Activated CD4-positive, alpha-beta memory T cell treated with anti-CD3 and anti-CD28 coated beads, Interleukin-2, amount 10 ng/mL, durations not matched to agents 7 days and 5 days (primary cell): ENCODE measurements at regions of chr17 and their contacts with region 1.

Region 1: DNA sequence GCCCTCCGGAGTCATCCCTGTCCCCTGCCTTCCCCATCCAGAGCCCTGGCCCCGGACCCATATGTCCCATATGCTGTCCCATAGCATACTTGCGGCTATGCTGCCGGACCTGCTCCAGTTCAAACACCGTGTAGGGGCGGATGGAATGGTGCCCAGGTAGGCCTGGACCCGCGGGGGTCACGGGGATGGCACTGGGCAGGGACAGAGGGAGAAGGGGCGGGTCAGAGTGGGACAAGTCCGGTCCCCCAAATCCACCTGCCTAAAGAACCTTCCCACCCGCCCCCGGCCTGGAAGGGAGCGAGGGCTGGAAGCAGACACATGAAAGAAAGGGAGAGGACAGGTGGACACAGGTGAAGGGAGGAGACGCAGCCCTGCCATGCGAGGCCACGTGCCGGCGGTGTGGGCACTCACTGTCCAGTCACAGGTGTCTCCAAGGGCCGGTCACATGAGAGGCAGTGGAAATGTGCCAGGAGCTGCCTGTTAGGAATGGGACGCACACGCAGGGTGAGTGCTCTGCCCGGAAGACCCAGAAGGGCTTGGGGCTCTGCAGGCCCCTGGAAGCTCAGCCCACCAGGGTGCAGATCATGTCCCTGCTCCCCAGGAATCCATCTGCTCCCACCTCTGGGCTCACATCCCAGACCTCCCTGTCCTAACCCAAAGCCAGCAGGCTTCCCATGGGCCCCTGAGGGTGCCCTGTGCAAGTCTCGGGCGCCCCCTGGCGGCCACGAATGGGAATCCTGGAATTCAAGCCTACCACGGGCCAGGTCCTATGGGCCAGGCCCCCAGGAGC is 14.0 kb downstream of the UBALD2 start:
- DNase-seq: peak; percentile 88
- H3K4me3 Mint-ChIP-seq: no peak overlapping the region
- H3K27ac Mint-ChIP-seq: no peak overlapping the region
- H3K4me1 Mint-ChIP-seq: peaks cover 13% of the 10 kb centered on the region
- H3K27me3 Mint-ChIP-seq: no peaks in the 10 kb centered on the region

Region 2: GRCh38 chr17:76014184-76014924 is 264.8 kb before region 1 on chr17:
- CTCF ChIA-PET with region 1: interaction called, 20 read pairs
- POLR2A ChIA-PET with region 1: no interaction called
- DNase-seq: peak; percentile 80
- H3K4me3 Mint-ChIP-seq: no peak overlapping the region
- H3K27ac Mint-ChIP-seq: no peak overlapping the region
- H3K4me1 Mint-ChIP-seq: peaks cover 2% of the 10 kb centered on the region
- H3K27me3 Mint-ChIP-seq: peaks cover 3% of the 10 kb centered on the region

Region 3: GRCh38 chr17:76115138-76115754 is 163.9 kb before region 1 on chr17:
- CTCF ChIA-PET with region 1: interaction called, 187 read pairs
- POLR2A ChIA-PET with region 1: interaction called, 222 read pairs
- DNase-seq: no peak
- H3K4me3 Mint-ChIP-seq: no peak overlapping the region
- H3K27ac Mint-ChIP-seq: no peak overlapping the region
- H3K4me1 Mint-ChIP-seq: no peaks in the 10 kb centered on the region
- H3K27me3 Mint-ChIP-seq: peaks cover 4% of the 10 kb centered on the region

Region 4: DNA sequence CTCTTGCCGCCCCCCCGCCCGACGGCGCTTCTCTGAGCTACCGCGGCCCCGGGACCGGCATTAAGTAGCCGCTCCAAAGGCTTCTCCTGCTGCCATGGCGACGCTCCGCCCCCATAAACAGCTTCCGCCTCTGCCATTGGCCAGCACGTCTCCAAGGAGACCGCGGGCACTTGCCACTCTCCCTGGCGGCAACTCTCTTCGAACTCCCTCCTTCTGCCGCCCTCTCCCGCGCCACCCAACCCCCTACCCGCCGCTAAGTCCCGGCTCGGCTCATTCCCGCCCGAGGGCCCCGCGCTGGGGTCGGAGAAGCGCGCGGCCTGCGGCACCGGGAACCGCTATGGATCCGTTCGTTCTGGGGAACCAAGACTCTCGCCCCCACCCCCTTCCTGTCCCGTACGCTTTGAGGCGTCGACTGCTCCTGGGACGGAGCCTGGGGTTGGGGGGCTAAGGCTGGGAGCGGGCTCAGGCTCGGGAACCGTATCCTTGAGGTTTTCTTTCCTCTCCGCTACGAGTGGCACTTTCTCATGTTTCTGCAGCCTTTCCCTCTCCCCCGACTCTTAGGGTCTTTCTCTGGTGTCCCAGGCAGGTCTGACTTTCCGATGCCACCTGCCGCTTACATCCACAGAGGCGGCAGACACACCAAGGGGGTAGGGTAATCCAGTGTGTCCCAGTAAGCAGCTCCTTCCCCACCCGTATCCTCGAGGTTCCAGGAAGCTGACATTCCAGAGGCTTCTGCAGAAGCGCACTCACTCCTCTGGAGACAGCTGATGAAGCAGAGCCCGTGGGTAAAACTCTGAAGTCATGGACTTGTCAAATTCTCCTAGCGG is 137.7 kb before region 1 on chr17 and contains the start of gene FOXJ1:
- CTCF ChIA-PET with region 1: interaction called, 18 read pairs
- POLR2A ChIA-PET with region 1: interaction called, 173 read pairs
- DNase-seq: peak; percentile 94
- H3K4me3 Mint-ChIP-seq: peak within 1 kb of the TSS; percentile 71
- H3K27ac Mint-ChIP-seq: peak within 1 kb of the TSS; percentile 91
- H3K4me1 Mint-ChIP-seq: peaks cover 60% of the 10 kb centered on the region
- H3K27me3 Mint-ChIP-seq: peaks cover 14% of the 10 kb centered on the region
- total RNA-seq, gene FOXJ1: 0.13 to 0.15 TPM

Region 5: GRCh38 chr17:76240461-76241203 is 38.5 kb before region 1 on chr17 and contains the start of gene RNF157:
- CTCF ChIA-PET with region 1: interaction called, 16 read pairs
- POLR2A ChIA-PET with region 1: interaction called, 1,335 read pairs
- DNase-seq: peak; percentile 73
- H3K4me3 Mint-ChIP-seq: peak within 1 kb of the TSS; percentile 81
- H3K27ac Mint-ChIP-seq: peak within 1 kb of the TSS; percentile 85
- H3K4me1 Mint-ChIP-seq: peaks cover 74% of the 10 kb centered on the region
- H3K27me3 Mint-ChIP-seq: peaks cover 7% of the 10 kb centered on the region
- total RNA-seq, gene RNF157: 79.8 to 83.9 TPM

Region 6: DNA sequence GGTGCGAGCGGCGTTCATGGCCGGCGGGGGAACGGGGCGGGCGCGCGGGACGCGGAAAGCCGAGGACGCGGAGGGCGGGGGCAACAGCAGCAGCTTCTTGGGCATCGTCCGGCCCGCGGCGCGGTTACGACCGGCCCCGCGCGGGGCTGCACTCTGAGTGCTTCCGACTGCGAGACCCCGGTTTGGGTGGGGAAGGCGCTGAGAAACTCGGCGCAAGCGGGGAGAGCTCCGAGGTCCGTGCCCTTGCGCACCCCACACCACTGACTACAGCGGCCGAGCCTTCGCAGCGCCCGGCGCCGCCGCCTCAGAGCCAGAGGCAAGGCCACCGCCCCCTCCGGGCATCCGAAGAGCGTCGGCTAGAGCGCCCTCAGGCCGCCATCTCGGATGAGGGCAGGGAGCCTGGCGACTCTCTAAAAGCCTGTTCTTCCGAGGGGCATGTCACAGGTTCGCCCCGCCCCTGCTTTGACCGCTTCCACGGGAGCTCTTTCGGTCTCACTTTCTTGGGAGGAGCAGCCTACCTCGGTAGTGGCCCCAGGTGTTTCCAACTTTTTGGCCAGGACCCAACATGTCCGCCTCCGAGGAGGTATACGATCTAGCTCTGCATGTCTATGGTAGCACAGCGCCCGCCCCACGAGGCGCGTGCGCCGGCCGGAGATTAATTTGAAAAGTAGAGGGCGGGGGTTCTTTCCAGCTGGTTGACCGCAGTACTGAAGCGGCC is 74.6 kb after region 1 on chr17 and contains the start of gene PRPSAP1:
- CTCF ChIA-PET with region 1: no interaction called
- POLR2A ChIA-PET with region 1: no interaction called
- DNase-seq: peak; percentile 84
- H3K4me3 Mint-ChIP-seq: peak within 1 kb of the TSS; percentile 94
- H3K27ac Mint-ChIP-seq: peak within 1 kb of the TSS; percentile 97
- H3K4me1 Mint-ChIP-seq: peaks cover 30% of the 10 kb centered on the region
- H3K27me3 Mint-ChIP-seq: no peaks in the 10 kb centered on the region
- total RNA-seq, gene PRPSAP1: 59.9 to 66.7 TPM